Heart left ventricle (tissue), 16 donors: ENCODE measurements at regions of chr4 and their contacts with region 1.

Region 1: DNA sequence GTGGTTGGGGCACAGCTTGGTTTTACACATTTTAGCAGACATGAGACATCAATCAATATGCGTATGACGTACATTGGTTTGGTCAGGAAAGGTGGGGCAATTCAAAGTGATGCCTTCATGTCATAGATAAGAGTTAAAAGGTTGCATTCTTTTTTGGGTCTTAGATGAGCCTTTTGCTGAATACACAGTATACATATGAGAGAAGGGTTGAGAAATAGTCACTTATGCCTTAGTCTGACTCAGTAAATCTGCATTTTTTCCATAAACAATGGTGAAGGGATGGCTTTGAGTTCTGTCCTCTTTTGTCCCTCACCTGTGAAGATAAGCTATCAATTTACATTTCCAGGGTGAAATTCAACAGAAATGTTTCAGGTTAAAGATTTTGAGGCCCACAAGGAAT is 43.9 kb upstream of the UGT2B15 start:
- DNase-seq: no peak
- ATAC-seq: no peak
- H3K4me3 ChIP-seq: no peak overlapping the region
- H3K27ac ChIP-seq: no peak overlapping the region
- H3K4me1 ChIP-seq: no peaks in the 10 kb centered on the region
- H3K27me3 ChIP-seq: no peaks in the 10 kb centered on the region
- CTCF ChIP-seq: no peak
- POLR2A ChIP-seq: no peak

Region 2: DNA sequence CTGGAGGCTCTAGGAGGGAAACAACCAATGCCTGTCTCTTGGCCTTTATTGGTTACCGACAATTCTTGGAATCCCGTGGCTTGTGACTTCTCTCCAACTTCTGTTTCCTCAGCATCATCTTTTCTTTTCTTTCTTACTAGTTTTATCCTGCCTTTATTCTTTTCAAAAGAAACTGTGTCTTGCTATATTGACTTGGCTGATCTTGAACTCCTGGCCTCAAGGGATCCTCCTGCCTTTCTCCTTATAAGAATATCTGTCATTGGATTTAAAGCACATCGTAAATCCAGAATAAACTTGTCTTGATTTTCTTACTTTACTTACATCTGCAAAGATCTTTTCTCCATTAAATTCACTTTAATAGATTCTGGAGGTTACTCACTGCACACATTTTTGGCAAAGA is 51.5 kb after region 1 on chr4:
- intact Hi-C with region 1: loop called in 1 of 10 experiments (anchors 2 kb)
- DNase-seq: no peak
- ATAC-seq: no peak
- H3K4me3 ChIP-seq: no peak overlapping the region
- H3K27ac ChIP-seq: no peak overlapping the region
- H3K4me1 ChIP-seq: no peaks in the 10 kb centered on the region
- H3K27me3 ChIP-seq: no peaks in the 10 kb centered on the region
- CTCF ChIP-seq: no peak
- POLR2A ChIP-seq: no peak

Region 3: GRCh38 chr4:69239557-69240168 is 525.3 kb after region 1 on chr4:
- intact Hi-C with region 1: no loop called
- DNase-seq: no peak
- ATAC-seq: no peak
- H3K4me3 ChIP-seq: no peak overlapping the region
- H3K27ac ChIP-seq: no peak overlapping the region
- H3K4me1 ChIP-seq: no peaks in the 10 kb centered on the region
- H3K27me3 ChIP-seq: no peaks in the 10 kb centered on the region
- CTCF ChIP-seq: no peak
- POLR2A ChIP-seq: no peak